Right ventricle myocardium superior (tissue), 1 donor: ENCODE measurements at regions of chr2 and their contacts with region 1.

Region 1: DNA sequence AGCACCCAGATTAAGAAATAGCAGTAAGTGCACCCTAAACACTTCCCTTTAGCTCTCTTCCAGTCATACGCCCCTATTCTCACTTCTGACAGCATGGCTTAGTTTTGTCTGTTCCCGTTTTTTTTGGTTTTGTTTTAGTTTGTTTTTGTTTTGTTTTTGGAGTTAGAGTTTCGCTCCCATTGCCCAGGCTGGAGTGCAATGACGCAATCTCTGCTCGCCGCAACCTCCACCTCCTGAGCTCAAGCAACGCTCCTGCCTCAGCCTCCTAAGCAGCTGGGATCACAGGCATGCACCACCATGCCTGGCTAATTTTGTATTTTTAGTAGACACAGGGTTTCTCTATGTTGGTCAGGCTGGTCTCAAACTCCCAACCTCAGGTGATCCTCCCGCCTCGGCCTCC is 2067.7 kb downstream of the SUCLG1 start:
- DNase-seq: no peak
- ATAC-seq: no peak

Region 2: GRCh38 chr2:82344670-82345069 is 46.7 kb before region 1 on chr2:
- intact Hi-C with region 1: no loop called
- DNase-seq: no peak
- ATAC-seq: no peak

Region 3: GRCh38 chr2:82411071-82411470 is 19.7 kb after region 1 on chr2:
- intact Hi-C with region 1: loop called (anchors 2 kb)
- DNase-seq: no peak
- ATAC-seq: no peak

Region 4: GRCh38 chr2:82875858-82876257 is 484.5 kb after region 1 on chr2:
- intact Hi-C with region 1: no loop called
- DNase-seq: no peak
- ATAC-seq: no peak